Right cardiac atrium (tissue), 5 donors: ENCODE measurements at regions of chr7 and their contacts with region 1.

Region 1: DNA sequence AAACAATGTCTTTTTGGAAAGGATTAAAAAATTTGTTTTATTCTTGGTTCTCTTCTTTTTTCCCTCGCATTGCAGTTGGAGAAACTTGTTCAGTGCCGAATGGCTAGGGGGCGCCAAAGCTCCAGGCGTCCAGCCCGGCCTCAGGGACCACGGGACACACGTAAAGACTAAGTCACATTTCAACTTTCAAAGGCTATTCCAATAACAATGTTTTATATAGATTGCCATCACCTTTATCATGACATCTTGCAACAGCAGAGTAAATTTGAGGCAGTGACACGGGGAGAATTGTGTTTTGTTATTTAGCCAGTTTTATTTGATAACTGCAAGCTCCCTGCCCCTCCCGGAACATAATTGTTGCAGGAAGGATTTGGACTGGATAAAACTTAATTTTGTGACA is 2.2 kb upstream of the IGFBP3 start:
- DNase-seq: peak; percentile 77 to 92 (median 91)
- ATAC-seq: peak; percentile 56 to 64
- H3K4me3 ChIP-seq: peak overlapping the region; percentile 44
- H3K27ac ChIP-seq: no peak overlapping the region
- H3K4me1 ChIP-seq: no peaks in the 10 kb centered on the region
- H3K27me3 ChIP-seq: no peaks in the 10 kb centered on the region

Region 2: DNA sequence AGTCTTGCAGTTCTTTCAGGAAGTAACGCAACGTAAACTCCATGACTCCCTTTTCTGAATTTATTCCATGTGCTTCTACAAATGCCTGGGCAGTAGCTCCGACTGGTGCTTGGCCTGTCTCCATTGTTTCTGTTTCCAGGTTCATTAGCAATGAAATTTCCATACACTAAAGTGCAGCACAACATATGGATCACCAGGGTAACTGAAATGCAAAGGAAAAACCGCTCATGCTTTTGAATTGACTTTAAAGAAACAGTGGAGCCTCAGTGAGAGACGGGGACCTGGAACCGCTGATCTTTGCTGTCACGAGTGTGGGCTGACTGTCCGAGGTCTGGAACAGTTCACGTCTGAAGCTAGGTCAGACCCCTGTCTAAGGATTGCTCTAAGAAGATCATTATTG is 124.3 kb after region 1 on chr7:
- intact Hi-C with region 1: loop called in 1 of 4 experiments (anchors 10 kb)
- DNase-seq: no peak
- ATAC-seq: no peak
- H3K4me3 ChIP-seq: no peak overlapping the region
- H3K27ac ChIP-seq: no peak overlapping the region
- H3K4me1 ChIP-seq: no peaks in the 10 kb centered on the region
- H3K27me3 ChIP-seq: no peaks in the 10 kb centered on the region

Region 3: DNA sequence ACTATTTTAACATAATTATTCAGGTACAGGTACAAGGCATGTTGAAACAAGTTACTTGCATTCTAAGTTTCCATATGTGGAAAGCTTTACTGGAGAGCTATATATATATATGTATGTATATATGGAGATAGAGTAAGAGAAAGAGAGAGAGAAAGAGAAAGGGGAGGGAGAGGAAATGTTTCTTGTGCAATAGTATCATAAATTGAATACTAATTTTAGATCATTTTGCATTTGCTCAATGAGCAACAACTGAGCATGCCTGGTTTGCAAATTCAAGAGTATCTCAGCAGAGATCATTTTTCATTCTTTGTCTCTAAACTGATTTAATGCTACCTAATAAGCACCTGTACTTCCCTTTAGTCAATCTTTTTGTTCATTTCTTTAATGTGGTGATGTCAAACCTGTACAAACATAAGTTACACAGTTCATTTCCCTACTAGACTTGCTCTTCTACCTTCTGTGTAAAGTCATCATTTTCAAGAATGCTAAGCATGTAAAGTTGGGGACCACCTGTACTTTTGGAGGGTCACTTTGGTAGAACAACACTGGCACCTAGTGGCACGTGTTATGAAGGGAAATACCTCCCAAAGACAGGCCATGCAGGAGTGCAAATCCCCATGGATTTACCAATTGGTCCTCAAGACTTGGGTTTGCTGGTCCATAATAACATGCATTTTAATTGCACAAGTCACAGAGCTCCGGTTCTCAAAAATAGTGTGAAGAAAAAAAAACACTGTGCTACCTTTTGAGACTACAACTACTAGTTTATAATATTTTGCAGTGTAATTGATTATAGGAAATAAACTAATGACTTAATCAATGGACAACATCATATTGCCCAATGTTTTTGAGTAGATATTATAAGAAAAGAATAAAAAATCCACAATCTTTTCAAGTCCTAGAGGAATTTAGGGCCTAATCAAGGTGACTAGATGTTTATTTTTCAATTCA is 429.0 kb after region 1 on chr7:
- intact Hi-C with region 1: loop called (anchors 2 to 5 kb)
- DNase-seq: peak in 1 of 3 donors; percentile 59
- ATAC-seq: peak; percentile 54 to 60
- H3K4me3 ChIP-seq: no peak overlapping the region
- H3K27ac ChIP-seq: no peak overlapping the region
- H3K4me1 ChIP-seq: no peaks in the 10 kb centered on the region
- H3K27me3 ChIP-seq: no peaks in the 10 kb centered on the region

Region 4: DNA sequence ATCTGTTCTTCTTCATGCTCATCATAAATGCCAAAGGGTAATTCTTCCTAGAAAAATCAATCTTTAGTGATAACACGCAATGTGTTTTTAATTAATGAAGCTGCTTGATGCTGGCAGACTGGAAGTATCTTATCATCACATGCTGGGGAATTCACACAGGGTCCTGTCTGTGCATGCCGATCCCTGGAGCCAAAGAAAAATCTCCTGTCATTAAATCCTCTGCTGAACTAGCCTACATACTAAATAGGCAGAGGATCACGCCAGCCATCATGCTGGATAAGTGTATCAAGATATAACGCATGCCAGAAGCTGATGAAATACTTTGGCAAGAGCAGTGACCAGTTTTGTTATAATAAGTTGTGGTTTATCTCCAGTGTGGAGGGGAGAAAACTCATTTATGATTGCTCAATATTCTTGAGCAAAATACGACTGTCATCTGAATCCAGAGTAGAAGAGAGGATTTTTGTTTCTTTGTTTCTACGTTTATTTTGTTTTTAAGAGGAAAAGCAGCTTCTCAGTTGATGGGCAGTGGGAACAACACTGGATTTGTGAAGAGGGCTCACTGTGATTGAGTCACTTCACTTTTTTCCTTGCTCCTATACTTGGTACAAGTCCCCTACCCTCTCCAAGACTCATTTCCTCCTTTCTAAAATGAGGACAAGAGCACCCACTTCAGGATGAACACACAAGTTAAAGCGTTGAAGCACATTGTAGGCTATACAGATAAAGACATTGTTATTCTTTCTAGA is 1009.6 kb after region 1 on chr7:
- intact Hi-C with region 1: loop called in 1 of 4 experiments (anchors 10 kb)
- DNase-seq: peak; percentile 26 to 78 (median 61)
- ATAC-seq: peak; percentile 84 to 95
- H3K4me3 ChIP-seq: no peak overlapping the region
- H3K27ac ChIP-seq: peak overlapping the region; percentile 79
- H3K4me1 ChIP-seq: no peaks in the 10 kb centered on the region
- H3K27me3 ChIP-seq: no peaks in the 10 kb centered on the region

Region 5: DNA sequence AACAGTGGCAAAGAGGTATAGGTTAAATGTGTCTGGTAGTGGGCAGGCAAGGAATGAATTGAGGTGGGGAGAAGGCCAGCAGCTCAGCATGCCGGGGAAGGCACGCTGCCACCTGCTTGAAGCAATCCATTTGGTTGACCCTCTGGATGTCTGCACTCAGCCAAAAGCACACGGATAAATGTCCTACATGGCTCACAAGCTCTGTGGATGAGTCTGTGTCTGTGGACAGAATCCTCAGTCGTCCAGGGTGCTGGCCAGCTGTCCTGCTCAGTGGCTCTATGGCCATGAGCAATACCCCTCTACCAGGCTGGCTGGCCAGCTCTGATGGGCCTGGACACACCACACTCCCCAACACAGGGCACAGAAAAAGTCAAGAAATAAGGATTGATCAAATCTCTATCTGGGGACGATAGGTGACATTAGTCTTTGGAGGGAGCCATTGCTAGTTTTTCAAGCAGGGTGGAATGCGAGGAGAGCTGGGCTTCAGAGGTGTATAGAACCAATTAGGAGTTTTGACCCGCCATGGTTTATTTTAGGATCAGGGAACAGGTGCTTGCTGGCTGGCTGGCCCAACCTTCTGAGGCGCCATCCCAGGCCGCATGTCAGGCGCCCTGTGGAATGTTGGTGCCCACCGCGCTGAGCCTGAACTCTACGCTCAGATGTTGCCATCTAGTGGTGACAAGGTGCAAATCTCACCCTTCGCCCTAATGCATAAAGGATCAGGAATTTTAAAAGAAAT is 1165.2 kb after region 1 on chr7:
- intact Hi-C with region 1: loop called (anchors 5 to 10 kb)
- DNase-seq: peak; percentile 50 to 82 (median 79)
- ATAC-seq: peak; percentile 88 to 94
- H3K4me3 ChIP-seq: no peak overlapping the region
- H3K27ac ChIP-seq: no peak overlapping the region
- H3K4me1 ChIP-seq: peaks cover 5% of the 10 kb centered on the region
- H3K27me3 ChIP-seq: no peaks in the 10 kb centered on the region

Region 6: DNA sequence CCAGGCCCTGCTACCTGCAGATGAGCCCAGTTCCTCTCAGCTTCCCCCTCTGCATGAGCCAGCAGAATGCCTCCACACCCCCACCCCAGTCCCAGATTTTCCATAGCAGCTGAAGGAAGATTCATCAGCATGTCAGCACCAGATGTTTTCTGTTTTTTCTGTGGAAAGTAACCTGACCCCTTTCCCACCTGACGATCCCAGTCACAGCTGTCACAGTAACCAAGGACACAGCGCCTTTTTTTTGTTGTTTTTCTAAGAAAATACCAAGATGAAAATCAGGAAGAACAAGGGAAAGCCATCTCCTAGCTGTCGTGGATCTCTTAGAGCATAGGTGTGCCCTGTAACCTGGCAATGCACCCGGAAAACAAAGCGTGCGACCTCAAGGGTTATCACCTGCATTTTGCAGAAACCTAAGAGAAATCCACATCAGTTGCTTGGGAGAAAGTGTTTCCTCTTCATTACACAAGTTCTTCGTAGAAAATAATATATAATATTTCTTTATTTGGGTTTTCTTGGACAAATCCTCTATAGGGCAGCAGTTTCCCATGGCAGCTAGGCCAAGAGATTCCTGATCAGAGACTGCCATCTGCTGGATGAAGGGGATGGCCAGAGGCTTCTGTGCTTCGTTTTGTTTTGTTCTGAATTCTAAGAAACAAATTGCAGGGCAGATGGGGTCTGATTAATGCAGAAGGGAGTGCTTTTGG is 1256.7 kb after region 1 on chr7:
- intact Hi-C with region 1: loop called in 3 of 4 experiments (anchors 5 to 10 kb)
- DNase-seq: no peak
- ATAC-seq: peak; percentile 65 to 67
- H3K4me3 ChIP-seq: no peak overlapping the region
- H3K27ac ChIP-seq: no peak overlapping the region
- H3K4me1 ChIP-seq: peaks cover 2% of the 10 kb centered on the region
- H3K27me3 ChIP-seq: no peaks in the 10 kb centered on the region

Region 7: DNA sequence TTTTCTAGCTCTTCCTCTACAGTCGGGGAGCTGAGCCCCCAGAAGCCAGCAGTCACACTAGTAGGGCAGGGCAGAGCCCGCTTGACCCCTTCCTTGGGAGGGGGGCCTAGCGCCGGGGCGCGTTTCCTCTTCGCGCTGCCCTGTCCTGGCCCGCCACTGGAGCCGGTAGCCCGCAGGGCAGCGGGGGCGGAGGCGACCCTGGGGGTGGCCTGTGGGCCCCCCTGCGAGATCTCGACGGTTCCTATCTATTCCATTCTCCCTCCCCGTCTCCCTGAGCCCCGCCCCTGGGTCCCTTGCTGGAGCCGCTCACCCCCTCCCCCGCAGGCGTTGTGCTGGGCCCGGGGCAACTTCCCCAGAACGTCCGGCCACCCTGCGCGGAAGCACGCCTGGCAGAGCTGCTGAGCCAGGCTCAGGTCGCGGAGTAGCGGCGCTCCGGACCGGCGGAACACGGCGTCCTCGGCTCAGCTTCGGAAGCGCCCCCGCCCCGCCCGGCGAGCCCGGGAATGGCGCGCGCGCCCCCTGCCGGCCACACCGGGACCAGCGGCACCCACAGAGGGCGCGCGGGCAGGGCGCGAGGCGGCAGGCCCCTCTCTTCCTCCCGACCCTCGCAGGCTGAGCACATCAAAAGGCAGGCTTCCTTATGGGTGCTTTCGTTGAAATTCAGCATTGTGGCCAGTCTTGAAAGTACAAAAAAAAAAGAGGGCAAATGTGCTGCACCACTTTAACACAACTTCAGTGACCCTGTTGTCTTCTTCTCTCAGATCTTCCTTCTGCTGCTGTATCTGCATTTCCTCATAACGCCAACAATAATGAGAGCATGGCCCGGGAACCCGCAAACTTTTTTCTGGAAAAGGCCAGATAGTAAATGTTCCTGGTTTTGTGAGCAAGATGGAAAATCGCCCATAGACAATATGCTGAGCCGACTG is 1331.1 kb after region 1 on chr7:
- intact Hi-C with region 1: loop called in 1 of 4 experiments (anchors 10 kb)
- DNase-seq: peak; percentile 87 to 97 (median 95)
- ATAC-seq: peak; percentile 96
- H3K4me3 ChIP-seq: peak overlapping the region; percentile 60
- H3K27ac ChIP-seq: peak overlapping the region; percentile 90
- H3K4me1 ChIP-seq: no peaks in the 10 kb centered on the region
- H3K27me3 ChIP-seq: no peaks in the 10 kb centered on the region